ENCODE measurements at regions of chr10 and their contacts with region 1.

Region 1: GRCh38 chr10:99435986-99436638 is 5.7 kb upstream of the GOT1 start:
- DNase-seq: peak; percentile 44
- ATAC-seq: peak; percentile 58
- H3K4me3 ChIP-seq: no peak overlapping the region
- H3K27ac ChIP-seq: no peak overlapping the region
- H3K4me1 ChIP-seq: peaks cover 5 to 14% of the 10 kb centered on the region in 2 experiments; a peak in 3 of 4 replicates
- H3K27me3 ChIP-seq: no peaks in the 10 kb centered on the region
- CTCF ChIP-seq: peak; percentile 42 to 80 (median 75); a peak in 4 of 6 replicates
- POLR2A ChIP-seq: no peak
- RAD21 ChIP-seq: peak; percentile 75

Region 2: GRCh38 chr10:99395750-99396445 is 40.2 kb before region 1 on chr10:
- CTCF ChIA-PET with region 1: interaction called, 10 read pairs
- POLR2A ChIA-PET with region 1: no interaction called
- RAD21 ChIA-PET with region 1: no interaction called
- intact Hi-C with region 1: loop called (anchors 2 kb)
- DNase-seq: no peak
- ATAC-seq: peak; percentile 41; the same call in 1 of the 2 replicates
- H3K4me3 ChIP-seq: no peak overlapping the region
- H3K27ac ChIP-seq: peak overlapping the region; percentile 26; the same call in 1 of the 2 replicates
- H3K4me1 ChIP-seq: peaks cover 15 to 31% of the 10 kb centered on the region in 2 experiments; a peak in 3 of 4 replicates
- H3K27me3 ChIP-seq: no peaks in the 10 kb centered on the region
- CTCF ChIP-seq: no peak
- POLR2A ChIP-seq: no peak
- RAD21 ChIP-seq: no peak

Region 3: GRCh38 chr10:99457813-99458212 is 21.7 kb after region 1 on chr10:
- CTCF ChIA-PET with region 1: interaction called, 22 read pairs
- POLR2A ChIA-PET with region 1: interaction called, 5 read pairs
- RAD21 ChIA-PET with region 1: no interaction called
- intact Hi-C with region 1: no loop called
- DNase-seq: no peak
- ATAC-seq: no peak
- H3K4me3 ChIP-seq: no peak overlapping the region
- H3K27ac ChIP-seq: no peak overlapping the region
- H3K4me1 ChIP-seq: peaks cover 0 to 6% of the 10 kb centered on the region in 2 experiments; a peak in 2 of 4 replicates
- H3K27me3 ChIP-seq: peaks cover 36% of the 10 kb centered on the region; the same call in 1 of the 2 replicates
- CTCF ChIP-seq: no peak
- POLR2A ChIP-seq: no peak
- RAD21 ChIP-seq: no peak

Region 4: GRCh38 chr10:99548041-99548530 is 112.0 kb after region 1 on chr10:
- CTCF ChIA-PET with region 1: interaction called, 11 read pairs
- POLR2A ChIA-PET with region 1: no interaction called
- RAD21 ChIA-PET with region 1: interaction called in 1 of 2 experiments, 3 read pairs
- intact Hi-C with region 1: loop called (anchors 1 kb)
- DNase-seq: peak; percentile 50
- ATAC-seq: peak; percentile 98
- H3K4me3 ChIP-seq: no peak overlapping the region
- H3K27ac ChIP-seq: no peak overlapping the region
- H3K4me1 ChIP-seq: peaks cover 0 to 10% of the 10 kb centered on the region in 2 experiments; a peak in 1 of 4 replicates
- H3K27me3 ChIP-seq: peaks cover 26% of the 10 kb centered on the region; the same call in 1 of the 2 replicates
- CTCF ChIP-seq: peak; percentile 71 to 84 (median 81)
- POLR2A ChIP-seq: no peak
- RAD21 ChIP-seq: peak; percentile 71

Region 5: DNA sequence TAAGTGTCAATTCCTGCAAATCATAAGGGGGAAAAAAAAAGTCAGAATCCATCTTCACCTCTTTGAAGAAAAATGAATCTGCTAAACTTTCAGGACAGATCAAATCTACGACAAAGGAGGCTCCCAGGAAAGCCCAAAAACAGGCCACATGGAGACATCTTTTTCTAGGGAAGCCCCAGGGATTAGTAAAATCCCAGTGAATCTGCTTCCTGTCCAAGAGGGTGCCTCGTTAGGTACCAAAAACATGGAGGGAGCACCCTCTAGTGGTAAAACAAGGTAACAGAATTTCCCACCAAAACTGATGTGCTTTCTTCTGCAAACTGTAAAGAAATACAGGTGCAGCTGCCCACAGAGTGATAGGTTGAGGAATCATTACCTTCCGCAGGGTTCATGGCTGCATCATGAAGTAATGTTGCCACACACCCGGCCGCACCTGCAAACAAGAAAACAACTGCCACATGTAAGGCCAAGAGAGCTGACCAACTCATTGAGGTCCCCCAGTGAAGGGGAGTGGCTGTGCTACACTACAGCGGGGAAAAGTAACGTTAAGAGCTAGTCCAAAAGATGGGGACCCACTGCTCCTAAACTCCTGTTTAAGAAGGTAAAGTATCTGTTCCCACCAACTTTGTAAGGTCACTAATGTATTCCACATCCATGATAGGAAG is 176.2 kb after region 1 on chr10:
- CTCF ChIA-PET with region 1: interaction called, 46 read pairs
- POLR2A ChIA-PET with region 1: interaction called, 5 read pairs
- RAD21 ChIA-PET with region 1: interaction called in 1 of 2 experiments, 4 read pairs
- intact Hi-C with region 1: loop called (anchors 1 kb)
- DNase-seq: peak; percentile 59
- ATAC-seq: peak; percentile 88
- H3K4me3 ChIP-seq: no peak overlapping the region
- H3K27ac ChIP-seq: no peak overlapping the region
- H3K4me1 ChIP-seq: no peaks in the 10 kb centered on the region
- H3K27me3 ChIP-seq: no peaks in the 10 kb centered on the region
- CTCF ChIP-seq: peak in 2 of 3 experiments; percentile 87 to 97; a peak in 4 of 6 replicates
- POLR2A ChIP-seq: no peak
- RAD21 ChIP-seq: no peak